PC-9 (cell line): ENCODE measurements at regions of chr13 and their contacts with region 1.

Region 1: GRCh38 chr13:98653463-98653985 is 76.6 kb upstream of the STK24 start:
- DNase-seq: peak; percentile 78 to 87
- H3K4me3 ChIP-seq: no peak overlapping the region
- H3K27ac ChIP-seq: peak overlapping the region; percentile 18; the same call in 1 of the 2 replicates
- H3K4me1 ChIP-seq: peaks cover 47% of the 10 kb centered on the region
- H3K27me3 ChIP-seq: no peaks in the 10 kb centered on the region
- CTCF ChIP-seq: peak; percentile 96

Region 2: GRCh38 chr13:98445340-98446233 is 207.9 kb before region 1 on chr13:
- CTCF ChIA-PET with region 1: interaction called, 7 read pairs
- POLR2A ChIA-PET with region 1: no interaction called
- intact Hi-C with region 1: loop called (anchors 1 kb)
- DNase-seq: peak; percentile 76 to 77
- H3K4me3 ChIP-seq: no peak overlapping the region
- H3K27ac ChIP-seq: no peak overlapping the region; the same call in 1 of the 2 replicates
- H3K4me1 ChIP-seq: peaks cover 4% of the 10 kb centered on the region; the same call in 1 of the 2 replicates
- H3K27me3 ChIP-seq: no peaks in the 10 kb centered on the region
- CTCF ChIP-seq: peak; percentile 96

Region 3: GRCh38 chr13:98484289-98485219 is 169.0 kb before region 1 on chr13:
- CTCF ChIA-PET with region 1: interaction called, 11 read pairs
- POLR2A ChIA-PET with region 1: interaction called, 5 read pairs
- intact Hi-C with region 1: loop called (anchors 2 kb)
- DNase-seq: peak; percentile 94 to 100
- H3K4me3 ChIP-seq: peak overlapping the region; percentile 59
- H3K27ac ChIP-seq: peak overlapping the region; percentile 99
- H3K4me1 ChIP-seq: peaks cover 57% of the 10 kb centered on the region
- H3K27me3 ChIP-seq: no peaks in the 10 kb centered on the region
- CTCF ChIP-seq: no peak

Region 4: GRCh38 chr13:98535501-98536354 is 117.8 kb before region 1 on chr13:
- CTCF ChIA-PET with region 1: no interaction called
- POLR2A ChIA-PET with region 1: no interaction called
- intact Hi-C with region 1: loop called (anchors 1 kb)
- DNase-seq: peak; percentile 5 to 61
- H3K4me3 ChIP-seq: no peak overlapping the region
- H3K27ac ChIP-seq: peak overlapping the region; percentile 59
- H3K4me1 ChIP-seq: peaks cover 23% of the 10 kb centered on the region
- H3K27me3 ChIP-seq: no peaks in the 10 kb centered on the region
- CTCF ChIP-seq: no peak

Region 5: GRCh38 chr13:98570929-98571372 is 82.6 kb before region 1 on chr13:
- CTCF ChIA-PET with region 1: interaction called, 3 read pairs
- POLR2A ChIA-PET with region 1: interaction called, 3 read pairs
- intact Hi-C with region 1: loop called (anchors 1 kb)
- DNase-seq: peak; percentile 68 to 98
- H3K4me3 ChIP-seq: peak overlapping the region; percentile 98; the same call in 1 of the 2 replicates
- H3K27ac ChIP-seq: peak overlapping the region; percentile 86
- H3K4me1 ChIP-seq: peaks cover 69% of the 10 kb centered on the region
- H3K27me3 ChIP-seq: no peaks in the 10 kb centered on the region
- CTCF ChIP-seq: no peak

Region 6: DNA sequence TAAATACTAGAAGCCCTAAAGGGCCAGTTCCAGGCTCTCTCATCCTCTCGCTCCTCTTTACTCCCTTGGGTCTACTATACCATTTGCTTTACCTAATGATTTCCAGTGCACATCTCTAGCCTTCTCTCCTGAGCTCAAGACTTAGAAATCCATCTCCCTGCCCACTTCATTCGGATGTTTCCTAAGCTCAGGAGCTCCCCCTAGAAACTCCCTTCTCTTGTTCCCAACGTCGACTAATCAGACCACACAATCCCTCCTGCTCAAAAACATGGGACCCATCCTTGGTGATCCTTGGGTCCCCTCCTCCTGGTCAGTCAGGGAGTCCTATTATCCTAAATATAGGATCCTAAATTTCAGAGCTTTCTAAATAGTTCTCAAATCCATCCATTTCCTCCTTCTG is 55.5 kb before region 1 on chr13:
- CTCF ChIA-PET with region 1: no interaction called
- POLR2A ChIA-PET with region 1: interaction called, 17 read pairs
- intact Hi-C with region 1: no loop called
- DNase-seq: no peak
- H3K4me3 ChIP-seq: no peak overlapping the region
- H3K27ac ChIP-seq: no peak overlapping the region
- H3K4me1 ChIP-seq: 0 out of 2 replicates have a peak, but pooled peaks cover 4% of the 10 kb centered on the region
- H3K27me3 ChIP-seq: no peaks in the 10 kb centered on the region
- CTCF ChIP-seq: no peak

Region 7: GRCh38 chr13:98856983-98857382 is 203.5 kb after region 1 on chr13:
- CTCF ChIA-PET with region 1: no interaction called
- POLR2A ChIA-PET with region 1: no interaction called
- intact Hi-C with region 1: no loop called
- DNase-seq: no peak
- H3K4me3 ChIP-seq: no peak overlapping the region
- H3K27ac ChIP-seq: no peak overlapping the region
- H3K4me1 ChIP-seq: no peaks in the 10 kb centered on the region
- H3K27me3 ChIP-seq: no peaks in the 10 kb centered on the region
- CTCF ChIP-seq: no peak